Dendritic cell treated with granulocyte-macrophage colony-stimulating factor and Interleukin-4, amounts not matched to agents 40 ng/mL and 50 ng/mL, for 4 days (primary cell): ENCODE measurements at regions of chr3 and their contacts with region 1.

Region 1: GRCh38 chr3:196639483-196640296 is at the start of gene NRROS:
- H3K4me3 Mint-ChIP-seq: peak within 1 kb of the TSS; percentile 88
- H3K27ac Mint-ChIP-seq: peak within 1 kb of the TSS; percentile 97
- H3K4me1 Mint-ChIP-seq: peaks cover 66% of the 10 kb centered on the region
- H3K27me3 Mint-ChIP-seq: no peaks in the 10 kb centered on the region

Region 2: GRCh38 chr3:196585044-196585757 is 54.5 kb before region 1 on chr3:
- intact Hi-C with region 1: no loop called
- H3K4me3 Mint-ChIP-seq: no peak overlapping the region
- H3K27ac Mint-ChIP-seq: no peak overlapping the region
- H3K4me1 Mint-ChIP-seq: peaks cover 6% of the 10 kb centered on the region
- H3K27me3 Mint-ChIP-seq: no peaks in the 10 kb centered on the region

Region 3: GRCh38 chr3:196609343-196609775 is 30.3 kb before region 1 on chr3:
- intact Hi-C with region 1: loop called (anchors 2 kb)
- H3K4me3 Mint-ChIP-seq: peak overlapping the region; percentile 43
- H3K27ac Mint-ChIP-seq: peak overlapping the region; percentile 79
- H3K4me1 Mint-ChIP-seq: peaks cover 27% of the 10 kb centered on the region
- H3K27me3 Mint-ChIP-seq: no peaks in the 10 kb centered on the region

Region 4: GRCh38 chr3:196620161-196620604 is 19.5 kb before region 1 on chr3:
- intact Hi-C with region 1: loop called (anchors 1 kb)
- H3K4me3 Mint-ChIP-seq: peak overlapping the region; percentile 55
- H3K27ac Mint-ChIP-seq: peak overlapping the region; percentile 88
- H3K4me1 Mint-ChIP-seq: peaks cover 69% of the 10 kb centered on the region
- H3K27me3 Mint-ChIP-seq: no peaks in the 10 kb centered on the region

Region 5: DNA sequence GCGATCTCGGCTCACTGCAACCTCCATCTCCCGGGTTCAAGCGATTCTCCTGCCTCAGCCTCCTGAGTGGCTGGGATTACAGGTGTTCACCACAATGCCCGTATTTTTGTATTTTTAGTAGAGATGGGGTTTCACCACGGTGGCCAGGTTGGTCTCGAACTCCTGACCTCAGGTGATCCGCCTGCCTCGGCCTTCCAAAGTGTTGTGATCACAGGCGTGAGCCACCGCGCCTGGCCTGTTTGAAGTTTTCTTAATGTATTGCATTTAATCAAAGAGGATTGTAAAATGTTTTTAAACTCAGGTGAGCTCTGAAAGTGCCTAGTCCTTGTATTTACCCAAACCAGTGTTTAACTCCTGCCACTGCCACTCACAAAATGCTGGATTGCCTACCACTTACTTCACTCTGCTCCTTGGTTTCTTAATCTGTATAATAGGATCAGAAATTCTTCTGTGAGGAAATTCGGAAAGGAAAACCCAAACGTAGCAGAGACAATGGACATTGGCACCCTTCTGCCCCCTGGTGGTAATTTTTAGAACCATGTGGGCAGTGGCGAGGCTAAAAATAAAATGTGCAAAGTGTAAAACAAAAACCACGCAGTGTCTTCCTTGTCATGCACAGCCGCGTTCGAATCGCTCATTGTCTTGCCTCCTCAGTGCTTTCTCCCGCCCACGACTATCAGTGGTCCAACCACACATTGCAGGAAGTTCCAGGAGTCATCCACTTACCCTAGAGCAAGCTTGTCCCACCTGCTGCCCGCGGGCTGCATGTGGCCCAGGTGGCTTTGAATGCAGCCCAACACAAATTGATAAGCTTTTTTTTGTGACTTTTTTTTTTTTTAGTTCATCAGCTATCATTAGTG is 45.1 kb after region 1 on chr3:
- intact Hi-C with region 1: loop called (anchors 5 kb)
- H3K4me3 Mint-ChIP-seq: peak overlapping the region; percentile 45
- H3K27ac Mint-ChIP-seq: peak overlapping the region; percentile 77
- H3K4me1 Mint-ChIP-seq: peaks cover 63% of the 10 kb centered on the region
- H3K27me3 Mint-ChIP-seq: no peaks in the 10 kb centered on the region